CD8-positive, alpha-beta T cell (primary cell): ENCODE measurements at regions of chr4 and their contacts with region 1.

Region 1: DNA sequence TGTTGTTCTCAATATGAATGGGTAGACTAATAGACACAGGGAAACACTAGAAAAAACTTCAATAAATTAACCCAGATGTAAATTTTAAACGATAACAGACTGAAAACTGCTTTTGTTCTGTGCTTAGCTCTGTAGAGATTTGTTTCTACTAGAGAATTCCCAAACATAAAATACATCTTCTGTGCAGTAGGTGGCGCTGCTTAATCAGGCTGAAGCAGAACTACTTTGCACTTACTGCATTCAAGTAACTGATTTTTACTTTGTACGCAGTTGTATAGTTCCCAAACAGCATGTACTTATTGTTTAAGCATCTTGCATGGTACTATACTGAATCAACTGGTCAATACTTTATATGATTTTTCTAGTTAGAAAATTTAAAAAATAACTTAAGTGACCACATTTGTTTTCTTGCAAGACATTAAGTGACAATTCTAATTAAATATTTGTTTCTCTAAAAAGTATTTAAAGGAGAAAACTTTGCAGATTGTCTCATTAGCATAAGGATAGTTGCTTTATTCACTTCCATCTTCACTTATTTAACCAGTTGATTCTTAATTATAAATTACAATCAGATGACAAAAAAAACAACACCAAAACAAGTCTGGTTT is 490.6 kb downstream of the IL15 start:
- DNase-seq: peak; percentile 8 to 77 (median 59)
- ATAC-seq: peak; percentile 66
- H3K4me3 ChIP-seq: no peak overlapping the region
- H3K4me3 Mint-ChIP-seq: no peak overlapping the region
- H3K27ac ChIP-seq: no peak overlapping the region
- H3K27ac Mint-ChIP-seq: no peak overlapping the region
- H3K4me1 ChIP-seq: peaks cover 9% of the 10 kb centered on the region
- H3K4me1 Mint-ChIP-seq: peaks cover 30% of the 10 kb centered on the region
- H3K27me3 ChIP-seq: no peaks in the 10 kb centered on the region
- H3K27me3 Mint-ChIP-seq: no peaks in the 10 kb centered on the region
- CTCF ChIP-seq: peak; percentile 97

Region 2: GRCh38 chr4:142194905-142195304 is 67.9 kb after region 1 on chr4:
- CTCF ChIA-PET with region 1: no interaction called
- POLR2A ChIA-PET with region 1: no interaction called
- intact Hi-C with region 1: no loop called
- DNase-seq: no peak
- ATAC-seq: no peak
- H3K4me3 ChIP-seq: no peak overlapping the region
- H3K4me3 Mint-ChIP-seq: no peak overlapping the region
- H3K27ac ChIP-seq: no peak overlapping the region
- H3K27ac Mint-ChIP-seq: no peak overlapping the region
- H3K4me1 ChIP-seq: no peaks in the 10 kb centered on the region
- H3K4me1 Mint-ChIP-seq: no peaks in the 10 kb centered on the region
- H3K27me3 ChIP-seq: no peaks in the 10 kb centered on the region
- H3K27me3 Mint-ChIP-seq: no peaks in the 10 kb centered on the region
- CTCF ChIP-seq: no peak

Region 3: GRCh38 chr4:142567199-142567598 is 440.2 kb after region 1 on chr4:
- CTCF ChIA-PET with region 1: no interaction called
- POLR2A ChIA-PET with region 1: no interaction called
- intact Hi-C with region 1: loop called in 1 of 2 experiments (anchors 10 kb)
- DNase-seq: peak in 8 of 9 experiments; percentile 10 to 78 (median 37)
- ATAC-seq: peak; percentile 70
- H3K4me3 ChIP-seq: peak overlapping the region; percentile 17 to 45
- H3K4me3 Mint-ChIP-seq: peak overlapping the region; percentile 74
- H3K27ac ChIP-seq: peak overlapping the region; percentile 53 to 64
- H3K27ac Mint-ChIP-seq: peak overlapping the region; percentile 84
- H3K4me1 ChIP-seq: peaks cover 10% of the 10 kb centered on the region
- H3K4me1 Mint-ChIP-seq: peaks cover 29% of the 10 kb centered on the region
- H3K27me3 ChIP-seq: no peaks in the 10 kb centered on the region
- H3K27me3 Mint-ChIP-seq: no peaks in the 10 kb centered on the region
- CTCF ChIP-seq: no peak

Region 4: DNA sequence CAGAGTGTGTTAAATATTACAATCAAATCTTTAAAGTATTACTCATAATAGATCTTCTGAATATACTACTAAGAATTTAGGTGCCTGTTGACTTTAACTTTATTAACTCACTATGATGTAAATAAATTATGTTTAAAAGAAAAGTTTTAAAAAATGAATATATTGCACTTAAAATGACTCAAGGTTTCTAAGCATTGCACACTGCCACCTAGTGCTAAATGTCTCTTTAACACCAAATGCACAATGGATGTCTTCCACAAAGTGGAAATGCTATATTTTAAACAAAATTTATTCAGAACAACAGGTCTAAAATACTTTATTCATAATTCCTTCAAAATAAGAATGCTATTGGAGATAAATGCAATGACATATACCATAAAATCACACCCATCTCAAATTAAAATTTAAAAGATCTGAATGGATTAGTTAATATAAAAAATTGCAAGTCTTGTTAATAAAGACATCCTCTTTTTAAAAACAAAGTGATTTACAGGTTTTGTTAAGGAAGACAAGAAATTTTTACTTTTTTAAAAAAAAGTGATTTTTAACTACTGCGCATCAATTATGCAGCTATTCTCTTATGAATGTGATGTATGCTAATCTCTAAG is 713.6 kb after region 1 on chr4:
- CTCF ChIA-PET with region 1: interaction called, 28 read pairs
- POLR2A ChIA-PET with region 1: no interaction called
- intact Hi-C with region 1: loop called in 1 of 2 experiments (anchors 1 kb)
- DNase-seq: peak in 2 of 9 experiments; percentile 43 to 53
- ATAC-seq: no peak
- H3K4me3 ChIP-seq: no peak overlapping the region
- H3K4me3 Mint-ChIP-seq: no peak overlapping the region
- H3K27ac ChIP-seq: no peak overlapping the region
- H3K27ac Mint-ChIP-seq: no peak overlapping the region
- H3K4me1 ChIP-seq: peaks cover 4% of the 10 kb centered on the region
- H3K4me1 Mint-ChIP-seq: peaks cover 9% of the 10 kb centered on the region
- H3K27me3 ChIP-seq: peaks cover 3 to 4% of the 10 kb centered on the region in 2 experiments
- H3K27me3 Mint-ChIP-seq: peaks cover 12% of the 10 kb centered on the region
- CTCF ChIP-seq: peak; percentile 77

Region 5: DNA sequence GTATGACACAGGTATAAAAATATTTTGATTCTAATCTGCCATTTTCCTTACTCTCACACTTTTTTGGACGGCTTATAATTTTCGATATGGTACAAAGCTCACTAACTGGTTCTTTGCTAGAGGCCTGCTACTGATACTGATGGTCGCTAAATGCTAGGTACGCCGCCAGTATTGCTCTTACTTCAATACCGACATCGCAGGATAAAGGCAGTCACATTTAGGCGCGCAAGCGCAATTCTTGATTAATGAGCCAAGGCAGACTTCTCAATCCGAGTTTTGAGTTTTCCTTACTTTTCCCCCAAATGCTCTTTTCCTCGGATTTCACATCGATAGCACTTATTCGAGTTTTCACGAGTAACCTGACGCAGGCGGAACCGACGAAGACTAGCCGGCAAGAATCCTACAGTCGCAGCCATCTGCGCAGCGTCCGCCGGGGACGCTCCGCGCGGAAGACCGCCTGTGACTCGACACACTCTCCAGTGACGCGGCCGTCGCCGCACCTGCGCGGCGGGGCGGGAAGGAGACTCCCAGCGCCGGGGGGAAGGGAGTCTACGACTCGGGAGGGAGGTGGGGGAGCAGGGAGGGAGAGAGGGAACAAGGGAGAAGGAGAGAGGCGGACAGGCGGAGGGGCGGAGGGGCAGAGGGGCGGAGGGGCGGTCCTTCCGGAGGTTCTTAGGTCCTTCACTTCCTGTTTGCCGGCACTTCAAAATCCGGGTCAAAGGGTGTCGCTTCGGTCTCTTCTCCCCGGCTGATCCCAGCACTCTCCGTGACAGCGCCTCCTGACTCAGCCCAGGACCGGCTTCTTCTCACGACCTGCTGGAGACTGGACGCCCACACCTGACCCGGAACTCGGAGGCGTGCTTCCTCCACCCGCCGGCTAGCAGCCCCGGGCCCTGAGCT is 1057.5 kb after region 1 on chr4 and contains the start of gene USP38:
- CTCF ChIA-PET with region 1: no interaction called
- POLR2A ChIA-PET with region 1: no interaction called
- intact Hi-C with region 1: loop called in 1 of 2 experiments (anchors 10 kb)
- DNase-seq: peak; percentile 69 to 94 (median 85)
- ATAC-seq: peak; percentile 82
- H3K4me3 ChIP-seq: peak within 1 kb of the TSS; percentile 48 to 86
- H3K4me3 Mint-ChIP-seq: peak within 1 kb of the TSS; percentile 90
- H3K27ac ChIP-seq: peak within 1 kb of the TSS; percentile 91 to 93
- H3K27ac Mint-ChIP-seq: peak within 1 kb of the TSS; percentile 96
- H3K4me1 ChIP-seq: peaks cover 39% of the 10 kb centered on the region
- H3K4me1 Mint-ChIP-seq: peaks cover 61% of the 10 kb centered on the region
- H3K27me3 ChIP-seq: no peaks in the 10 kb centered on the region
- H3K27me3 Mint-ChIP-seq: no peaks in the 10 kb centered on the region
- CTCF ChIP-seq: no peak
- total RNA-seq, gene USP38: 38.4 to 40.2 TPM

Region 6: GRCh38 chr4:143482840-143483239 is 1355.8 kb after region 1 on chr4:
- CTCF ChIA-PET with region 1: no interaction called
- POLR2A ChIA-PET with region 1: no interaction called
- intact Hi-C with region 1: loop called in 1 of 2 experiments (anchors 2 kb)
- DNase-seq: peak in 2 of 9 experiments; percentile 12 to 25
- ATAC-seq: no peak
- H3K4me3 ChIP-seq: no peak overlapping the region
- H3K4me3 Mint-ChIP-seq: no peak overlapping the region
- H3K27ac ChIP-seq: no peak overlapping the region
- H3K27ac Mint-ChIP-seq: no peak overlapping the region
- H3K4me1 ChIP-seq: no peaks in the 10 kb centered on the region
- H3K4me1 Mint-ChIP-seq: no peaks in the 10 kb centered on the region
- H3K27me3 ChIP-seq: no peaks in the 10 kb centered on the region
- H3K27me3 Mint-ChIP-seq: peaks cover 11% of the 10 kb centered on the region
- CTCF ChIP-seq: no peak